ENCODE measurements at regions of chr6 and their contacts with region 1.

Region 1: GRCh38 chr6:44475779-44476434 is 88.4 kb downstream of the CDC5L start:
- DNase-seq: no peak
- ATAC-seq: peak; percentile 97
- H3K4me3 ChIP-seq: no peak overlapping the region
- H3K27ac ChIP-seq: no peak overlapping the region
- H3K4me1 ChIP-seq: no peaks in the 10 kb centered on the region
- H3K27me3 ChIP-seq: no peaks in the 10 kb centered on the region; a peak in 3 of 4 replicates
- CTCF ChIP-seq: peak; percentile 84 to 95 (median 92)
- EP300 ChIP-seq: no peak
- POLR2A ChIP-seq: no peak
- RAD21 ChIP-seq: peak; percentile 81

Region 2: DNA sequence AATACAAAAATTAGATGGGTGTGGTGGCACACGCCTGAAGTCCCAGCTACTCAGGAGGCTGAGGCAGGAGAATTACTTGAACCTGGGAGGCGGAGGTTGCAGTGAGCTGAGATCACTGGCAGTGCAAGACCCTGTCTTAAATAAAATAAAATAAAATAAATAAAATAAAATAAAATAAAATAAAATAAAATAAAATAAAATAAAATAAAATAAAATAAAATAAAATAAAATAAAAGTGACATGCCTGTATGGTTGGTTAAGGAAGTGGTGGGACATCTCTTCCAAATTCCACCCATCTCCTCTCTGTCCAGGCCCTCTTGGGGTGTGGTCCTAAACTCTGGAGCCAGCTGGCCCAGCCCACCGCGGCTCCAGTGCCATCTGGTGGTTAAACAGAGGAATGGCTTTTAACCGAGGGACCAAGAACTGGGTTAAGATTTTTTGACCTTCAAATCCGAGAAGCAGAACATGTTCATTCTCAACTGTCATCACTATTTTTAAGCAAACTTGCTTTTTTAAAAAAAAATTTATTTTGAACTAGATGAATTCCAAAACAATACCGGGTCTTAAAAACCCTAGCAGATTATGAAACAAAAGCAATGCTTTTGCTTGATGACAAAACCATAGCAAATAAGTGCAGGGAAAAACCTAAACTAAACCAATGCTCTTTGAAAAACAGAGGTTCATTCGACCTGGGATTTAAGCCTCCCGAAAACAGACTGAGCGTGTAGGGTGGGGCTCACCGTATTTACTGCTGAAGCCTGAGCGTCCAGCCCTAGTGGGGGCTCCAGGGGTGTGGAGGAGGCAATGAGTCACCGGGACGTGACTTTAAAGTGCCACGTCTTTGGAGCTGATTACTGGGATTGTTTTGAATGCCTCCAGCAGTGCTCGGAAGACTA is 19.6 kb before region 1 on chr6:
- CTCF ChIA-PET with region 1: interaction called, 10 read pairs
- POLR2A ChIA-PET with region 1: no interaction called
- RAD21 ChIA-PET with region 1: no interaction called
- SMC1A ChIA-PET with region 1: interaction called, 3 read pairs
- in situ Hi-C with region 1: no loop called
- intact Hi-C with region 1: no loop called
- DNase-seq: no peak
- ATAC-seq: peak; percentile 95
- H3K4me3 ChIP-seq: no peak overlapping the region
- H3K27ac ChIP-seq: no peak overlapping the region
- H3K4me1 ChIP-seq: no peaks in the 10 kb centered on the region
- H3K27me3 ChIP-seq: no peaks in the 10 kb centered on the region
- CTCF ChIP-seq: peak; percentile 75 to 79 (median 76)
- EP300 ChIP-seq: no peak
- POLR2A ChIP-seq: no peak
- RAD21 ChIP-seq: peak; percentile 72

Region 3: DNA sequence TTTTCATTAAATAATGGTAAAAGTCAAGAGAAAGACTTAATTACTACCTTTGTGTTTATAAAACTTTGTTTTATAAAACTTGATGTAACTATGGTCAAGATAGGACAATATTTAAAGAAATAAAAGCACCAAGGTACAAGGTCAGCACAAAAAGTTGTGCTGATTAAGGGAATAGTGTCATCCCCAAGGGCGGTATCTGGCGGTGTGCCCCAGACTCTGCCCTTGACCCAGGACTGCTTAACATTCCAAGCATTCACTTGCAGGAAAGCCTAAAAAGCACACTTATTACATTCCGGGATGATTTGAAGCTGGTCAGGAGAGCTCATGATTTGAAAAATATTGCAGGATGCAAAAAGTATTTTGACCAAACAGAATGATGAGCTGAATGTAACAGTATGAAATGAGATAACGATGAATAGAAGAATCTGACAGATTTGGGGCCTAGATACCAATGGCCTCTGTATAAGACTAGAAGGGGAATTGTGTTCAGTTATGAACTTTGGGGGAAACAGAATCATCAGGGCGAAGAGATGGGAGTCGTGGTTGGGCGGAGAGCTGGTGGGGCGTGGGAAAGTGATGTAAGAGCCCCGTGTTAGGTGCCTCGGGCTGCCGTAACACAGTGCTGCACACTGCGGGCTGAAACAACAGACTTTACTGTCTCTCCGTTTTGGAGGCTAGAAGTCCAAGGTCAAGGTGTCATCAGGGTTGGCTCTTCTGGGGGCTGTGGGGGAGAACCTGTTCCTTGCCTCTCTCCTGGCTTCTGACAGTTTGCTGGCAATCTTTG is 11.2 kb before region 1 on chr6:
- CTCF ChIA-PET with region 1: interaction called, 15 read pairs
- POLR2A ChIA-PET with region 1: no interaction called
- RAD21 ChIA-PET with region 1: interaction called, 3 read pairs
- SMC1A ChIA-PET with region 1: no interaction called
- in situ Hi-C with region 1: no loop called
- intact Hi-C with region 1: no loop called
- DNase-seq: no peak
- ATAC-seq: no peak
- H3K4me3 ChIP-seq: no peak overlapping the region
- H3K27ac ChIP-seq: no peak overlapping the region
- H3K4me1 ChIP-seq: no peaks in the 10 kb centered on the region
- H3K27me3 ChIP-seq: no peaks in the 10 kb centered on the region
- CTCF ChIP-seq: no peak
- EP300 ChIP-seq: no peak
- POLR2A ChIP-seq: no peak
- RAD21 ChIP-seq: no peak

Region 4: DNA sequence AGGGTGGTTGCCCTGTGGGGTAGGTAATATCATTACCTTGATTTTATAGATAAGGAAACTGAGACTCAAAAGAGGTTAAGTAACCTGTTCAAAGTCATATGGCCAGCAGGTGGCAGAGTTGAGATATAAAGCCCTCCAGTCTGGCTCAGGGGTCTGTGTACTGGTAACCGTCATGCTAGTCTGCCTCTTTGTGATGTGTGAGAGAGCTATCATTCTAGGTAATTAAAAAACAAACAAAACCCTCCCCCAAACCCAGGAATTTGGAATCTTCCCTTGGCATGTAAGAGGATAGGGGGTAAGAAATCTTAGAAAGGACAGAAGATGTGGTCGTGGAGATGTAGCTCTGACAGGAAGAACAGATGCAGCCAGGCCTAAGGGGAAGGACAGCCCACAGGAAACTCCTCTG is 117.6 kb after region 1 on chr6:
- CTCF ChIA-PET with region 1: interaction called, 15 read pairs
- POLR2A ChIA-PET with region 1: no interaction called
- RAD21 ChIA-PET with region 1: no interaction called
- SMC1A ChIA-PET with region 1: no interaction called
- in situ Hi-C with region 1: no loop called
- intact Hi-C with region 1: loop called (anchors 1 kb)
- DNase-seq: peak; percentile 7
- ATAC-seq: peak; percentile 93
- H3K4me3 ChIP-seq: no peak overlapping the region
- H3K27ac ChIP-seq: no peak overlapping the region
- H3K4me1 ChIP-seq: no peaks in the 10 kb centered on the region
- H3K27me3 ChIP-seq: peaks cover 0 to 2% of the 10 kb centered on the region in 2 experiments; a peak in 1 of 4 replicates
- CTCF ChIP-seq: peak; percentile 55 to 60 (median 56); a peak in 5 of 6 replicates
- EP300 ChIP-seq: no peak
- POLR2A ChIP-seq: no peak
- RAD21 ChIP-seq: peak; percentile 63

Region 5: GRCh38 chr6:44649365-44650025 is 173.6 kb after region 1 on chr6:
- CTCF ChIA-PET with region 1: interaction called, 4 read pairs
- POLR2A ChIA-PET with region 1: no interaction called
- RAD21 ChIA-PET with region 1: interaction called, 4 read pairs
- SMC1A ChIA-PET with region 1: interaction called, 4 read pairs
- in situ Hi-C with region 1: no loop called
- intact Hi-C with region 1: loop called (anchors 5 kb)
- DNase-seq: no peak
- ATAC-seq: no peak
- H3K4me3 ChIP-seq: no peak overlapping the region
- H3K27ac ChIP-seq: no peak overlapping the region
- H3K4me1 ChIP-seq: no peaks in the 10 kb centered on the region
- H3K27me3 ChIP-seq: 0 out of 4 replicates have a peak, but pooled peaks cover 0 to 2% of the 10 kb centered on the region in 2 experiments
- CTCF ChIP-seq: no peak
- EP300 ChIP-seq: no peak
- POLR2A ChIP-seq: no peak
- RAD21 ChIP-seq: no peak

Region 6: GRCh38 chr6:44855562-44856411 is 379.9 kb after region 1 on chr6:
- CTCF ChIA-PET with region 1: no interaction called
- POLR2A ChIA-PET with region 1: no interaction called
- RAD21 ChIA-PET with region 1: no interaction called
- SMC1A ChIA-PET with region 1: no interaction called
- in situ Hi-C with region 1: no loop called
- intact Hi-C with region 1: no loop called
- DNase-seq: no peak
- ATAC-seq: no peak
- H3K4me3 ChIP-seq: no peak overlapping the region
- H3K27ac ChIP-seq: no peak overlapping the region
- H3K4me1 ChIP-seq: no peaks in the 10 kb centered on the region
- H3K27me3 ChIP-seq: no peaks in the 10 kb centered on the region
- CTCF ChIP-seq: no peak
- EP300 ChIP-seq: no peak
- POLR2A ChIP-seq: no peak
- RAD21 ChIP-seq: no peak

Region 7: DNA sequence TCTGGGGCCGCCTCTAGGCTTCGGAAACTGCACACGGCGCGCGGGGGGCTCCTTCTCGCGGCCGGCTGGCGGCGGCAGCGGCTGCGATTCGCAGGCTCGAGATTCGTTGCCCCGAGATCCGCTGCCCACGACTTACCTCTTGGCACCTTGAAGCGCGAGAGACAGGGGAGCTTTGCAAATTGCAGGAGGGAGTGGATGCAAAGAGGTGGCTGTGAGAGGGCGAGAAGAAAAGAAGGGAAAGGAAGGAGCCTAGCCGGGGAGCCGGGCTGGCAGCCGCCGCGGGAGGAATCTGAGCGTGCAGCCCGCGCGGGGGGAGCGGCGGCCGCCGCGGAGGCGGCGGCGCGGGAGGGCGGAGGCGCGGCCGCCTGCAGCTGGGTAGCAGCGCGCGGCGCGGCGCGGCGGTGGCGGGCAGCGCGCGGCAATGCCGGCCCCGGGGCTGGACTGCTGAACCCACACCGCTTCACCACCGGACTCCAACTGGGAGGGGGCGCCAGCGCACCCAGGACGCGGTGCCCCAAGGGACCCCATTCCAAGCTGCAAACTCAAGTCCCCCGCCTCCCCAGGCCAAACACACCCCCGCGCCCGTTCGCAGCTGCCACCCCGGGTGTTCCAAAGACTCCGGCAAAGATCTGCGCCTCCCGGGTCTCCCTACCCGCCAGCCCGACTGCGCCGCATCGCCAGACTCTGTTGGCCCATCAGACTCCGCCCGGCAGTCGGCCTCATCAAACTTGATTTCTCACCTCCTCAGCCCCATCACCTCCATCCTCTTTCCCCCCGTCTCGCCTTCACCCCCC is 946.0 kb after region 1 on chr6:
- CTCF ChIA-PET with region 1: no interaction called
- POLR2A ChIA-PET with region 1: no interaction called
- RAD21 ChIA-PET with region 1: no interaction called
- SMC1A ChIA-PET with region 1: no interaction called
- in situ Hi-C with region 1: no loop called
- intact Hi-C with region 1: loop called (anchors 5 kb)
- DNase-seq: no peak
- ATAC-seq: peak; percentile 49
- H3K4me3 ChIP-seq: peak overlapping the region; percentile 48; the same call in 1 of the 2 replicates
- H3K27ac ChIP-seq: no peak overlapping the region
- H3K4me1 ChIP-seq: no peaks in the 10 kb centered on the region; the same call in 1 of the 2 replicates
- H3K27me3 ChIP-seq: peaks cover 20 to 38% of the 10 kb centered on the region in 2 experiments
- CTCF ChIP-seq: peak in 2 of 3 experiments; percentile 10 to 15; a peak in 1 of 6 replicates
- EP300 ChIP-seq: no peak
- POLR2A ChIP-seq: no peak
- RAD21 ChIP-seq: no peak